ENCODE measurements at regions of chr1 and their contacts with region 1.

Region 1: DNA sequence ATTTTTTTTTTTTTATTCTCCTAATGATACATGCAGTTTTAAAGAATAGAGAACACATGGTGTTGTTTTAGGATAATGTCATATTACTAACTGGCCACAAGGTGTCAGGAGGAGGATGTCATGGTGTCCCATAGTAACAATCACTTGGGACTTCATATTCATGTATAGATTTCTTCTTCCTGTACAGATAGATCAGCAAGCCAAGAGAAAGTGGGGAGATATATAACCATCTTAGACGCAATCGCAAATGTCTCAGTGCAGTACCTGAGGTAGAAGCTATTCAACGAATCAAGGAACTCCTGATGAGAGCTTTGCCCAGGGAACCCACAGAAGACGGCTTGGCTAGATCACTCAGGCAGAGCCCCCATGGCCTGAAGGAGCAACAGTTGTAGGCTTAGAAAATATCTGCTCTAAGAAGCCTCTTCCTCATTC is 12.3 kb downstream of the OR2T11 start:
- H3K4me3 Mint-ChIP-seq: no peak overlapping the region
- H3K27ac Mint-ChIP-seq: no peak overlapping the region
- H3K4me1 Mint-ChIP-seq: no peaks in the 10 kb centered on the region
- H3K27me3 Mint-ChIP-seq: no peaks in the 10 kb centered on the region

Region 2: DNA sequence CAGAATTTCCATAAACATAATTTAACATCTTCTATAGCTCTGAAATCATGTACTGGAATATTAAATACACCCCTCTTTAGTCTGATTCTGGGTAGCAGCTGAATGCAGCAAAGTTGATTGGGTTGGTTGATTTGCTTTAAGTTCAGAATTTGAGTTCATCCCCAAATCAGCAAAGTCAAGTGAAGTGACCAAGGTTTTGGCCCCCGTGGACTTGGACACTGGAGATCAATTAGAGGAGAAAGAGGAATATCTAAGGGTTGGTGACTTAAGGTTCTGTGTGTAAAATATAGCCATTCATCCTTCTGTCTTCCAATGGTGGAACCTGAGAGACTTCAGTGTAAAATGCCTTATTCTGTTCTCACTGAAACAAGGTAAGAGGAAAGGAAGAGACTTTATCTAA is 527.7 kb before region 1 on chr1 and contains the start of gene OR2L13:
- intact Hi-C with region 1: no loop called
- H3K4me3 Mint-ChIP-seq: no peak within 1 kb of the TSS
- H3K27ac Mint-ChIP-seq: no peak within 1 kb of the TSS
- H3K4me1 Mint-ChIP-seq: no peaks in the 10 kb centered on the region
- H3K27me3 Mint-ChIP-seq: no peaks in the 10 kb centered on the region

Region 3: DNA sequence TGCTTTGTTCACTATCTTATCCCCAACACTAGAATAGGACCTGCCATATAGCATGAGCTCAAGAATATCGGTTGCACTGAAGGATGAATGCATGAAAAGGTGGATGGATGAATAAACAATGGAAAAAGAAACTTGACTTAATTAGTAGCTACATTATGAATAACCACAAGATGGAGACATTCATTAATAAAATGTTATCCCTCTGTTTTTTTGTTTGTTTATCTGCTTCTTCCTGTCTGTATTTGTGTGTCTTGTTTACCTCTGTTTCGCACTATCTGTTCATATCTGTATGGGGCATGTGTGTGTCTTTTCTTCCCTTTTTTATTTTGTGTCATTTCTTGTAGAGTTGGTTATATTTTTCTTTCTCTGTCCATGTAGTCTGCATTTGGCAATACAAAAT is 81.1 kb after region 1 on chr1:
- intact Hi-C with region 1: loop called (anchors 5 kb)
- H3K4me3 Mint-ChIP-seq: no peak overlapping the region
- H3K27ac Mint-ChIP-seq: no peak overlapping the region
- H3K4me1 Mint-ChIP-seq: peaks cover 14% of the 10 kb centered on the region
- H3K27me3 Mint-ChIP-seq: no peaks in the 10 kb centered on the region